Prostate gland (tissue), 2 donors: ENCODE measurements at regions of chr5 and their contacts with region 1.

Region 1: DNA sequence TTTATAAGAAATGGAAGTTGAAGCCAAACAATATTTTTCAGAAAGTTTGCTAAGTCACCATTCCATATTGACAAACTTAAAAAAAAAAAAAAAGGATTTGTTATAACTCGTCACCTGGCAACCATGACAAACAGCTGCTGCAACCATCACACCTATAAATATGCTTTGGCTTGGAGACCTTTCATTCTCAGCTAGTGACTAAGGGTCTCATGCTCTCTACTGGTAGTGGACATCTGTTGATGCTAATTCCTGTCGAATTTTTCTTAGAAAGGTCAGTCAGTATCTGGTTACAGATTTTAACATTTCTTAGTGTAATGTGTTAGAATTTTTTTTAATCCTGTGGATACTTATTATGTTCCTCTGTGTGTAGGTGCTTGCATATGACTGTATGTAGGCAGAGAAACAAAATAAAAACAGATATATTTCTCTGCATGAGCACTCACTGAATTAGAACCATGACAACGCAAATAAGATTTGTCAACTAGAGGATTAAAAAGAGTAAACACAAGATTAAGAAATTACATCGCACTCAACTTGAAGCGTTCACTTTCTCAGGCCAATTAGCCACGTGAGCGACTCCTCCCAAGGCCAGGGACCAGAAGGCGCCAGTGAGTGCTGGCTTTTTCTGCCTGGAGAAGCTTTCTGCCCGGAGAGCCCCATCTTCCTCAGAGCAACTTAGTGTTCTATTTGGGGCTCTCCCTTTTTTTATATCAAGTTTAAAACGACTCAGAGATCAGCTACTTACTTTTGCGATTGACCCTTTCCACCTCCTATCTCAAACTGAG is 27.0 kb upstream of the ZNF622 start:
- DNase-seq: peak; percentile 35
- H3K4me3 ChIP-seq: no peak overlapping the region
- H3K27ac ChIP-seq: peak overlapping the region; percentile 3 to 35
- H3K4me1 ChIP-seq: no peaks in the 10 kb centered on the region
- H3K27me3 ChIP-seq: no peaks in the 10 kb centered on the region
- CTCF ChIP-seq: no peak
- POLR2A ChIP-seq: no peak

Region 2: GRCh38 chr5:16552666-16553343 is 60.2 kb after region 1 on chr5:
- intact Hi-C with region 1: loop called (anchors 5 kb)
- DNase-seq: peak; percentile 83
- H3K4me3 ChIP-seq: no peak overlapping the region
- H3K27ac ChIP-seq: no peak overlapping the region
- H3K4me1 ChIP-seq: peaks cover 3% of the 10 kb centered on the region
- H3K27me3 ChIP-seq: no peaks in the 10 kb centered on the region
- CTCF ChIP-seq: peak; percentile 15 to 76 (median 62)
- POLR2A ChIP-seq: no peak

Region 3: DNA sequence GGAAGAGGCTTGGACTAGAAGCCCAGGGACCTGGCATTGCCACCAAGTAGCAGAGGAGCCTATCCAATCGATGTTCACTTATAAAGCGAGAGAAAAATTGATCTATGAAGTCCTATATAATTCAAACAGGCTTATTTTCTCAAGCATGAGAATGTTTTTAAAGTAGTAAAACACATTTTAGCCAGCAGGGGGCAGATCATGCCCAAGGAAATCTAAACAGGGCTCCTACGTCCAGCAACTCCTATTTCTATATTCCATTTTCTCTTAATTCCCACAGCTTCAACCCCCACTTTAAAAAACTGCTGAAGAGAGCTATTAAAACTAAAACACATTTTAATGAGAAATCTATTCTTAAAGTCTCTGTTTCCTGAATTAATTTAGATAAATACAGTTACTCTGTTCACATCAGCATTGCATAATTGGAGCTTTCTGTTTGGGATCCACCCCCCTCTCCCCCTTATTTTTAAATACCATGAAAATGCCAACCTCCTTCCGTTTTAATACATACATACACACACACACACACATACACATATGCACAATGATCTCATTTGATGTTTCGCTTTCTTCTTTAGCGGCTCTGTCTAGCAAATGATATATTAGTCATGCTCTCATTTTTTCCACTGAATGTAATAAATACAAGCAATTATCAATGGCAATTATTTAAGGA is 298.6 kb after region 1 on chr5:
- intact Hi-C with region 1: loop called (anchors 10 kb)
- DNase-seq: peak; percentile 51
- H3K4me3 ChIP-seq: no peak overlapping the region
- H3K27ac ChIP-seq: no peak overlapping the region
- H3K4me1 ChIP-seq: no peaks in the 10 kb centered on the region
- H3K27me3 ChIP-seq: no peaks in the 10 kb centered on the region
- CTCF ChIP-seq: peak; percentile 16 to 86 (median 78)
- POLR2A ChIP-seq: no peak

Region 4: DNA sequence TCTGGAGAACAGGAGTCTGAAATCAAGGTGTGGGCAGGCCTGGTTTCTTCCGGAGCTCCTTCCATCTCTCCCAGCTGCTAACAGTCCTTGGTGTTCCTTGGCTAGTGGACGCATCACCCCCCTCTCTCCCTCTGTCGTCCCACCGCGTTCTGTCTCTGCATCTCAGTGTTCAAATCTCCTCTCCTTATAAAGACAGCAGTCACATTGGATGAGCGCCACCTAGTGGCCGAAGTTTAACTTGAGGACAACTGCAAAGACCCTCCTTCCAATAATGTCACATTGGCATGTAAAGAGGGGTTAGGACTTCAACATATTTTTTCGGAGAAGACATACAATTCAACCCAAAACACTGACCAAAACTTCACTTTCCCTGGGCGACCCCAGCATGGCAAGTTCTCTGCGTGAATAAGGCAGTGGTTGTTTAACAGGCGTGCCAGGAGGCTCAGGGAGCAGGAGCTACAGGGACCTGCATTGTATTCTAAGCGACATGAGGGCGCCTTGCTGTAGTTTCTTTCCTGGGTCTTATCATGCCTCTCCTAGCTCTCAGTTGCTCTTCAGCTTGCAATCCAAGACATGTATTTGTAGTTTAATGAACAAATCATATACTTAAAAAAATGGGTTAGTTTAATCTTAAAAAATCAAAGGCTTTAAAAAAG is 696.9 kb after region 1 on chr5:
- intact Hi-C with region 1: loop called (anchors 5 kb)
- DNase-seq: peak; percentile 65
- H3K4me3 ChIP-seq: no peak overlapping the region
- H3K27ac ChIP-seq: no peak overlapping the region
- H3K4me1 ChIP-seq: no peaks in the 10 kb centered on the region
- H3K27me3 ChIP-seq: no peaks in the 10 kb centered on the region
- CTCF ChIP-seq: peak; percentile 67 to 96 (median 78)
- POLR2A ChIP-seq: no peak

Region 5: DNA sequence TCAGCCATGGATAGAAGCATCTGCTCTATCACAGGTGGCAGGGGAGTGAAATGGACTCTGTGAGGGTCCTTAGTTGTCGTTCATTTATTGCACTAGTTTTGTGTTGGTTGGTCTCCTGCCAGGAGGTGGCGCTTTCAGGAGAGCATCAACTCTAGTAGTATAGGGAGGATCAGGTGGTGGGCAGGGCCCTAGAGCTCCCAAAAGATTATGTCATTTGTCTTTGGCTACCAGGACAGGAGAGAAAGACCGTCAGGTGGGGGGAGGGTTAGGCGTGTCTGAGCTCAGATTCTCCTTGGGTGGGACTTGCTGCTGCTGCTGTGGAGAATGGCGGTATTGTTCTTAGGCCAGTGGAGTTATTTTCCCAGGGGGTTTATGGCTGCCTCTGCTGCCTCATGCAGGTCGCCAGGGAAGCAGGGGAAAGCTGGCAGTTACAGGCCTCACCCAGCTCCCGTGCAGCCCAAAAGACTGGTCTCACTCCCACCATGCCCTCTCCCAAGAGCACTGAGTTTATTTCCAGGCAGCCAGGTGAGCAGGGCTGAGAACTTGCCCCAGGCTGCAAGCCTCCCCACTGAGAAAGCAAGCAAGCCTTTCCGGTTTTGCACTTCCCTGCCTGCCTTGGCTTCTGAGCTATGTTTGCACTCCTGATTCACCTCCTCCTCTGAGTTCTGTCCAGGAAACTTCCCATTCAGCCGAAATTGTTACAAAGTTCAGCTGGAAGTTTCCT is 1459.0 kb after region 1 on chr5:
- intact Hi-C with region 1: no loop called
- DNase-seq: peak; percentile 30
- H3K4me3 ChIP-seq: no peak overlapping the region
- H3K27ac ChIP-seq: peak overlapping the region in 1 of 2 donors; percentile 17
- H3K4me1 ChIP-seq: no peaks in the 10 kb centered on the region
- H3K27me3 ChIP-seq: no peaks in the 10 kb centered on the region
- CTCF ChIP-seq: no peak
- POLR2A ChIP-seq: no peak